ENCODE measurements at regions of chr9 and their contacts with region 1.

Region 1: GRCh38 chr9:122453677-122454135 is 24.0 kb downstream of the OR1J1 start:
- DNase-seq: no peak
- ATAC-seq: no peak
- H3K4me3 ChIP-seq: no peak overlapping the region
- H3K4me3 Mint-ChIP-seq: no peak overlapping the region
- H3K27ac ChIP-seq: no peak overlapping the region
- H3K27ac Mint-ChIP-seq: no peak overlapping the region
- H3K4me1 ChIP-seq: no peaks in the 10 kb centered on the region
- H3K4me1 Mint-ChIP-seq: no peaks in the 10 kb centered on the region
- H3K27me3 ChIP-seq: peaks cover 0 to 4% (median 0%) of the 10 kb centered on the region in 4 experiments
- H3K27me3 Mint-ChIP-seq: peaks cover 22% of the 10 kb centered on the region
- CTCF ChIP-seq: no peak

Region 2: DNA sequence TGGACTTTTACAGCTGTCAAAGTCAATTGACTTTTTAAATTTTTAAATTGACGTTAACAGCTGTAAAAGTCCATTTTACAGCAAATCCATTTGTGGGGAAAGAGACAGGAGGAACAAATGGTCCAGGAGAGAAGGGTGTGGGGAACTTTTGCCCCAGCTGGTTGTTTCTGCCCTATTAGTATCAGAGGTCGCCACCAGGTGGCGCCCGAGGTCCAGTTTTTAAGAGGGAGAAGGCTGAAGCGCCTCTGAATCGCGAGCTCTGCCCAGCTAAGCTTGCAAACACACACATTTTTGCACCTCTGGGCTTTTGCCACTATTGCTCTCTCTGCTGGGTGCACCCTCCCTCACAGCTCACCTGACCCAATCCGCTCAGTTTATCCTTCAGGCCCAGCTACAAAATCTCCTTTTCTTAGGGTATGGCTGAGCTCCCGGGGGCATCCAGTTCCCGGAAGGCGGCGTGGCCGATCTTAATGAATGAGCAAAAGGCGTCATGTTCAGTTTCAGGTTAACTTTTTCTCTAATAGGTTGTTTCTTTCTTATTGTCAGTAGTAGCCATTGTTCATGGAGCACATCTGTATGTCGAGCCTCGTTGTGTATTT is 354.3 kb before region 1 on chr9:
- CTCF ChIA-PET with region 1: interaction called, 9 read pairs
- POLR2A ChIA-PET with region 1: no interaction called
- intact Hi-C with region 1: loop called (anchors 1 kb)
- DNase-seq: peak; percentile 85
- ATAC-seq: peak; percentile 87
- H3K4me3 ChIP-seq: no peak overlapping the region
- H3K4me3 Mint-ChIP-seq: peak overlapping the region; percentile 30
- H3K27ac ChIP-seq: no peak overlapping the region
- H3K27ac Mint-ChIP-seq: no peak overlapping the region
- H3K4me1 ChIP-seq: peaks cover 10 to 11% of the 10 kb centered on the region in 2 donors
- H3K4me1 Mint-ChIP-seq: peaks cover 12% of the 10 kb centered on the region
- H3K27me3 ChIP-seq: peaks cover 0 to 7% (median 3%) of the 10 kb centered on the region in 4 experiments
- H3K27me3 Mint-ChIP-seq: peaks cover 12% of the 10 kb centered on the region
- CTCF ChIP-seq: peak; percentile 88

Region 3: DNA sequence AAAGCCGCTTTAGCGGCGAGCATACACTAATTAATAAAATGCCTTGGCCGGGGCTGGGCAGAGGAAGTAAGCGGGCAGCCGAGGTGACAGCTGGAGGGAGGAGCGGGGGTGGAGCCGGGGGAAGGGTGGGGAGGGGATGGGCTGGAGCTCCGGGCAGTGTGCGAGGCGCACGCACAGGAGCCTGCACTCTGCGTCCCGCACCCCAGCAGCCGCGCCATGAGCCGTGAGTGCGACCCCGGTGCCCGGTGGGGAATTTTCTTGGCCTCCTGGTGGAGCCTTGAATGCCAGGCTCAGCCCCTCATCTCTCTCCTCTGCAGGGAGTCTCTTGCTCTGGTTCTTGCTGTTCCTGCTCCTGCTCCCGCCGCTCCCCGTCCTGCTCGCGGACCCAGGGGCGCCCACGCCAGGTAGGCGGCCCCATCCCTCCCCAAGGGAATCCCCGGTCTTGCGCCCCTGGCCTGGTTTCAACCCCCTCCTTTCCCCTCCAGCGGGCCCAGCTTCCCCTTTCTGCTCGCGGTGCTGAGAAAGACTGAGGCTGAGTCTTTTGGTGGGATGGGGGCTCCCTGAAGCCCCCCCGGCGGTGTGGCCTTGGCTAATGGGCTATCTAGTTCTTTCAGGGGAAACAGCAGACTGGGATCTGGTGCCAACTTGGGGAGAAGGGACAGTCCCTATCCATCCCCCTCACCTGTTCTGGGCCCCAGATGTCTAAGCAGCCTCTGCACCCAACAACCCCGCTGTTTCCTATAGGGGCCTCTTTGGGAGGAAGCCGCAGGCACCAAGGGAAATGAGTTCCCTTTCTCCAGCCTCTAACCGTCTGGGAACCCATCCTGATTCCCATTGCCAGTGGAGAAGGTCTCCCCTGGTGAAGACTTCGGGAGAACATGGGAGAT is 82.6 kb before region 1 on chr9 and contains the start of gene PTGS1:
- CTCF ChIA-PET with region 1: no interaction called
- POLR2A ChIA-PET with region 1: no interaction called
- intact Hi-C with region 1: loop called (anchors 5 kb)
- DNase-seq: peak; percentile 72
- ATAC-seq: peak; percentile 77
- H3K4me3 ChIP-seq: peak within 1 kb of the TSS; percentile 59 to 87 (median 63)
- H3K4me3 Mint-ChIP-seq: peak within 1 kb of the TSS; percentile 91
- H3K27ac ChIP-seq: peak within 1 kb of the TSS; percentile 67 to 76
- H3K27ac Mint-ChIP-seq: peak within 1 kb of the TSS; percentile 82
- H3K4me1 ChIP-seq: peaks cover 25 to 38% of the 10 kb centered on the region in 2 donors
- H3K4me1 Mint-ChIP-seq: peaks cover 46% of the 10 kb centered on the region
- H3K27me3 ChIP-seq: no peaks in the 10 kb centered on the region
- H3K27me3 Mint-ChIP-seq: no peaks in the 10 kb centered on the region
- CTCF ChIP-seq: no peak
- total RNA-seq, gene PTGS1: 9.5 and 10.4 TPM in 2 replicates

Region 4: DNA sequence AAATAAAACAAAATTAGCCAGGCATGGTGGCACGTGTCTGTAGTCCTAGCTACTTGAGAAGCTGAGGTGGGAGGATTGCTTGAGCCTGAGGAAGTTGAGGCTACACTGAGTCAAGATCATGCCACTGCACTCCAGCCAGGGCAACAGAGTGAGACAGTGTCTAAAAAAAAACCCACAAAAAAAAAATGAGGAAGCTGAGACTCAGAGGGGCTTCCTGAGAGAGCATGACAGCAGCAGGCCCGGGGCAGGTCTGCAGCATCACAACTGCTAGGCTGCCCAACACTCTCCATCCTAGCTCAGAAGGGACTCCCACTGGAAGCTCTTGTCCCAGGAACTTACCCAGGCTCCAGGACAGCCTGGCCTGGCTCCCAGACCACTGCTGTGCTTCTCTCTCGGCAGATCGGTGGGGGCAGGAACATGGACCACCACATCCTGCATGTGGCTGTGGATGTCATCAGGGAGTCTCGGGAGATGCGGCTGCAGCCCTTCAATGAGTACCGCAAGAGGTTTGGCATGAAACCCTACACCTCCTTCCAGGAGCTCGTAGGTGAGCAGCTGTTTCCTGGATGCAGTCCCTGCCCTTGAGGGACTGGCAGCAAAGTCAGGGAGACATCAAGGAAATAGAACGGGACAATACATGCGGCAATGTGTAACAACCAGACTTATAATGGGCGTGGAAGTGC is 63.8 kb before region 1 on chr9:
- CTCF ChIA-PET with region 1: interaction called, 7 read pairs
- POLR2A ChIA-PET with region 1: no interaction called
- intact Hi-C with region 1: loop called (anchors 5 kb)
- DNase-seq: peak; percentile 82
- ATAC-seq: peak; percentile 97
- H3K4me3 ChIP-seq: peak overlapping the region in 2 of 5 experiments; percentile 27 to 49
- H3K4me3 Mint-ChIP-seq: peak overlapping the region; percentile 60
- H3K27ac ChIP-seq: peak overlapping the region; percentile 54 to 69
- H3K27ac Mint-ChIP-seq: peak overlapping the region; percentile 86
- H3K4me1 ChIP-seq: peaks cover 33 to 37% of the 10 kb centered on the region in 2 donors
- H3K4me1 Mint-ChIP-seq: peaks cover 39% of the 10 kb centered on the region
- H3K27me3 ChIP-seq: no peaks in the 10 kb centered on the region
- H3K27me3 Mint-ChIP-seq: no peaks in the 10 kb centered on the region
- CTCF ChIP-seq: no peak